ENCODE measurements at regions of chr6 and their contacts with region 1.

Region 1: DNA sequence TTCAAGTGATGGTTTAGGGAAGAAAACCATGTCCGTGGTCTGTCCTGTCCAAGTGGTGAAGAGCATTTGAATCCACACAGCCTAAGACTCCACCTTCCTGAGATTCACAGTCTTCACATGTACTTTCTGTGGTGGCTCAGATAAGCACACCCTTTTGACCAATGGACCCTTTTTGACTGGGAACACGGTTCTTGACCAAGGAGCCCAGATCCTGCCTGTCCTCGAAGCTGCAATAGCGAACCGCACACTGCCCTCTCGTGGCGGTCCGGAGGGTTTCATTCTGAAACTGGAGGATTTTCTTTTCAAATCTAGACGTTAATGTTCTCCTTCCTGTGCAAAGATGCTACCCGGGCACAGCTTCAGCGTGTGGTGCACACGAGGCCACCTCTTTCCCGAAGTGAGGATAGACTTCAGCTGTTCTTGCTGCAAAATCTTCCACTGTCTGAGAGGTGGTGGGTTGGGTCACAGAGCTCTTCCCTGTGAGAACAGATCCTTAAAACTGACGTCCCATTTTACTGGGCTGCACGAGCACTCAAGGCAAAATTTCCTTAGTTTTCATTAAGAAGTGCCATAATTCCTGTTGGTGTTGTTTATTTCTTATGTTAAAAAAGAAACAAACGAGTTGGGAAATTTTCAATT is 90.5 kb downstream of the SYNJ2 start:
- DNase-seq: peak; percentile 69 to 85 (median 83)
- H3K4me3 ChIP-seq: no peak overlapping the region
- H3K27ac ChIP-seq: no peak overlapping the region
- H3K4me1 ChIP-seq: peaks cover 9% of the 10 kb centered on the region
- H3K27me3 ChIP-seq: no peaks in the 10 kb centered on the region
- CTCF ChIP-seq: peak; percentile 70 to 84 (median 73)
- EP300 ChIP-seq: no peak
- POLR2A ChIP-seq: no peak

Region 2: DNA sequence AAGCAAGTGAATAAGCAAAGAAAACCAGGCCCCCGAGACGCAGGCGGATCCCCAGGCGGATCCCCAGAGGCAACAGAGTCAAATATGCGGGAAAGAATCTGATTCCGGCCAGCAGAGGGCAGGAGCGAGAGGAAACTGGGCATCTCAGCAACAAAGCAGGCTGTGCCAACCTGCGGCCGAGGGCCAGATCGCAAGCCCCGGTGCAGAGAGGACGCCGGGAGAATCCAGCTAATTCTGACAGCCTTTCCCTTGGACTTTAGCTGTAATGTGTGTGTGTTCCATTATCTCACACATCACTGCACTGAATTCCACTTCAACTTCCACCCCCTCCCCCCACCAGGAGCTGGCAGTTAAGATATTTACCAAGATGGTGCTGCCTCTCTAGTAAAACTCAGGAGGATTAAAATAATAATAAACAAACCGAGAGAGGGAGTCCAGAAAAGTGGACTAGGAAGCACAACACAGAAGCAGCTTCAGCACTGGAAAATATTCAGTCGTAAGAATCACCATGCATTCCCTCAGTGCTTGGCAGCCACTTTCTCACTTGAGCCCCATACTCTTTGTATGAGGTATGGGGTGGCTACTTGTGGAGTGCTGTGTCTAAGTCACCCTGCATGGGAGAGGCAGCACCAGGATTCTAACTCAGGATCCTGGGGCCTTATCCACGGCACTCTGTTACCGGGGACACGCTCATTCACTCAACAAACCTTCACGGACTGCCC is 315.3 kb before region 1 on chr6:
- intact Hi-C with region 1: loop called in 2 of 4 experiments (anchors 5 to 10 kb)
- DNase-seq: peak; percentile 84 to 93 (median 91)
- H3K4me3 ChIP-seq: no peak overlapping the region
- H3K27ac ChIP-seq: no peak overlapping the region
- H3K4me1 ChIP-seq: peaks cover 7% of the 10 kb centered on the region
- H3K27me3 ChIP-seq: no peaks in the 10 kb centered on the region
- CTCF ChIP-seq: peak; percentile 64 to 85 (median 83)
- EP300 ChIP-seq: no peak
- POLR2A ChIP-seq: no peak

Region 3: GRCh38 chr6:157981395-157982296 is 90.6 kb before region 1 on chr6 and contains the start of gene SYNJ2:
- intact Hi-C with region 1: loop called in 3 of 4 experiments (anchors 5 to 10 kb)
- DNase-seq: peak; percentile 76 to 87 (median 77)
- H3K4me3 ChIP-seq: peak within 1 kb of the TSS; percentile 62
- H3K27ac ChIP-seq: peak within 1 kb of the TSS; percentile 27 to 35
- H3K4me1 ChIP-seq: no peaks in the 10 kb centered on the region
- H3K27me3 ChIP-seq: no peaks in the 10 kb centered on the region
- CTCF ChIP-seq: peak; percentile 23 to 68 (median 55)
- EP300 ChIP-seq: no peak
- POLR2A ChIP-seq: peak; percentile 30
- total RNA-seq, gene SYNJ2: 4.5 to 18.7 (median 10.0) TPM